Activated CD4-positive, alpha-beta T cell treated with anti-CD3 and anti-CD28 coated beads for 36 hours (primary cell): ENCODE measurements at regions of chr12 and their contacts with region 1.

Region 1: DNA sequence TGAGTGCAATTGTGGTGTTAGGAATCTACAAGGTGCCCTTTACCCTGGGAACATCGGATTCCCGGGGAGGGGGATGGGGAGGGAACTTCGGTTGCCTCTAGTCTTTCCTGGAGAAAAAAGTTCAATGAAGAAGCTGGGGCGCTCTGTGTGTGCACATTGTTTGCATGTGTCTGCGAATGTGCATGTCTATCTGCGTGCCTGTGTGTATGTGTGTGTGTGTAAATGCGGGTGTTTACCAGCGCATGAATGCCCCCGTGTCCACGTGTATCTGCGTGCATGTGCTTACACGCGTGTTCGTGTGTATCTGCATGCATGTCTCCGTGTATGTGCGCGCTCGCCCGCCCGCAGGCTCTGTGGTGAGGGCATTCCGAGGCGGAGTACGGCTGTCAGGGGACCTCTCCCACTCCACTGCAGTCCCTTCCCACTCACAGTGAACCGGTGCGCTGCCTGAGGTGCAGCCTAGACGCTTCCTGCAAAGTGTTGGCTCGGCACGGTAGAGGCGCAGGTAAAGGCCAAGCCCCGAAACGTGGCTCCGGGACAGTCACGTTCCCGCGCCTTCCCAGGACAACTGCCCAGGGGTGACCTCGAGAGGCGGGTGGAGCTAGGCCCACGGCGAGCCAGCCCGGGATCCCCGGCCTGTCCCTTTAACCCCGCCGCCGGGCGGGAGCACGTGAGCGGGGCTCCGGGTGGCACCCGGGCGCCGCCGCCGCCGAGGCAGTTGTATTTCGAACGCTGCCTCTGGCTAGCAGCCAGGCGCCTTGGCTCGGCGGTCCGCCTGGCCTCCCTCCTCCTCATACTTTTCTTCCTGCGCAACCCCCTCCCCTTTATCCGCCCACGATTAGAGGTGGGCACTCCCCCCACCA is 539 bp upstream of the HMGA2 start:
- DNase-seq: peak; percentile 42
- ATAC-seq: no peak
- H3K4me3 Mint-ChIP-seq: peak overlapping the region; percentile 54
- H3K27ac Mint-ChIP-seq: no peak overlapping the region
- H3K4me1 Mint-ChIP-seq: peaks cover 25% of the 10 kb centered on the region
- H3K27me3 Mint-ChIP-seq: peaks cover 51% of the 10 kb centered on the region

Region 2: DNA sequence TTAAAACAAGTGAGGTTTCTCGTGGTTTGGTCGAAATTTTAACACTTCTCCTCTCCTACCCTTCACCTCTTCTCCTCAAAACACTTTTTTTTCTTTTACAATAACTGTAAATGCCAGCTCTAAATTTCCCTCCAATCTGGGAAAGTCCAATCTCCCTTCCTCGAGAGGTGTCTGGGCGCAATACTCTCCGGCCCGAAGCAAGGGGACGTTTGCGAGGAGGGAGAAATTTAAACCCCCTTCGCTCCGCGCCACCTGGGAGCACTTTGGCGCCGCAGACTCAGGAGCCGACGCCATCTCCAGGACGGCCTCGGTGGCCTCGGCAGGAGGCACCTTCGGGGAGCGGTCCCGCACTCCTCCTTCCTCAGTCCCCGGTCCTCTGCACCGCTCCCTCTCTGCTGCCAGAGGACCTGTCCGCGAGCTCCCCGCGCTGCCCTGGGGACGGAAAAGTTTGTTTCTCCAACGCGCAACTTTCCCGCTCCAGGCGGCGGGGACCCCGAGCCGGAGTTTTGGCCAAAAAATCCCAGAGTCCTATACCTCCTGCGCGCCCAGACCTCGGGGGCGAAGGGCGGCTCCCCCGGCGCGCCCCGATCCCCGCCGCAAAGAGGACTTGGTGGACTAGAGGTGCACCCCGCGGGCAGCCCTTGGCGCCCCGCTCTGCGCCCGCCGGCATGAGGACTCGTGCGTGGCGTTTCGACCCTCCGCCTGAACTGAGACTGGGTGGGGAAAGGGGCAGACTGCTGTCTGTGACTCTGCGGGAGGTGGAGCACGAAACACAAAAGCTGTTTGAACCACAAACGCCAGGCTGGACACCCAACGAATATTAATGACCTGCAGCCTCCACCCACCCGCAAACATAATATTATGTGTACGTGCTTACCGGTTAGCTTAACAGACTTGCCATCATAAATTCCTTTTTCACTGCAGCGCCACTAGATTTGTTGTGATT is 94.6 kb before region 1 on chr12:
- CTCF ChIA-PET with region 1: no interaction called
- POLR2A ChIA-PET with region 1: no interaction called
- intact Hi-C with region 1: loop called in 1 of 2 experiments (anchors 5 kb)
- DNase-seq: peak; percentile 15
- ATAC-seq: no peak
- H3K4me3 Mint-ChIP-seq: peak overlapping the region; percentile 25
- H3K27ac Mint-ChIP-seq: no peak overlapping the region
- H3K4me1 Mint-ChIP-seq: peaks cover 5% of the 10 kb centered on the region
- H3K27me3 Mint-ChIP-seq: peaks cover 47% of the 10 kb centered on the region

Region 3: DNA sequence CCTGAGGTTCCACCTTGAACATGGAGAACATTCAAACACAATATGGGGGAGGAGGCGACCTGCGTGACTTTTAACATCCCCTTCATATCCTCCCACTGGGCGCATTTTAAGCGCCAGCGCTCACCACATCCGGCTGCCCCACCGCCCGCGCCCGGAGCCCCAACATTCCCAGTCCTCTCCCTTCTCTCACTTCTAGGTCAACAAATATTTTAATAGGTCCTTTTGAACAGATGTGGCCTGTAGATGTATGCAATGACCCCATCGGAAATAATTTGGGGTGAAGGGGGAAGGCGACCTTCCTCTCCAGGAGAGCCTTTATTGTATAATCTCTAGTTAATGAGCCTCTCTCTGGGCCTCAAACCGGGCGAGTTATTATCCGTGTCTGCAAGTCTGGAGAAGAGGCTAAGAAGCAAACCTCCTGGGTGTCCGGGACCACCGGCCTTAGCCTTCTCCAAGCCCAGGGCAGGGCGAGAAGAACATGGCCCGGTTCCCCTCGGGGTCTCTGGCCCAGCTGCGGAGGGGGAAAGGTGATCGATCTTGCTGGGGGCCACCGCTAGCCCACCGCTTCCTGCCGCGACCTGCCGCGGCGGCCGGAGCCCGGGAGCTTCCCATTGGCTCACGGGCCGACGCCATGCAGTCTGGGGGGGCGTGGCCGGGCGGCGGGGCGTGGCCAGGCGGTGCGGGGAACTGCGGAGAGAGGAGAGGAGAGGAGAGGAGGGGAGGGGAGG is 82.7 kb before region 1 on chr12:
- CTCF ChIA-PET with region 1: no interaction called
- POLR2A ChIA-PET with region 1: no interaction called
- intact Hi-C with region 1: loop called (anchors 5 to 10 kb)
- DNase-seq: peak; percentile 85
- ATAC-seq: peak; percentile 86
- H3K4me3 Mint-ChIP-seq: peak overlapping the region; percentile 67
- H3K27ac Mint-ChIP-seq: peak overlapping the region; percentile 78
- H3K4me1 Mint-ChIP-seq: peaks cover 11% of the 10 kb centered on the region
- H3K27me3 Mint-ChIP-seq: peaks cover 30% of the 10 kb centered on the region